Ascending aorta (tissue), 2 donors: ENCODE measurements at regions of chr19 and their contacts with region 1.

Region 1: DNA sequence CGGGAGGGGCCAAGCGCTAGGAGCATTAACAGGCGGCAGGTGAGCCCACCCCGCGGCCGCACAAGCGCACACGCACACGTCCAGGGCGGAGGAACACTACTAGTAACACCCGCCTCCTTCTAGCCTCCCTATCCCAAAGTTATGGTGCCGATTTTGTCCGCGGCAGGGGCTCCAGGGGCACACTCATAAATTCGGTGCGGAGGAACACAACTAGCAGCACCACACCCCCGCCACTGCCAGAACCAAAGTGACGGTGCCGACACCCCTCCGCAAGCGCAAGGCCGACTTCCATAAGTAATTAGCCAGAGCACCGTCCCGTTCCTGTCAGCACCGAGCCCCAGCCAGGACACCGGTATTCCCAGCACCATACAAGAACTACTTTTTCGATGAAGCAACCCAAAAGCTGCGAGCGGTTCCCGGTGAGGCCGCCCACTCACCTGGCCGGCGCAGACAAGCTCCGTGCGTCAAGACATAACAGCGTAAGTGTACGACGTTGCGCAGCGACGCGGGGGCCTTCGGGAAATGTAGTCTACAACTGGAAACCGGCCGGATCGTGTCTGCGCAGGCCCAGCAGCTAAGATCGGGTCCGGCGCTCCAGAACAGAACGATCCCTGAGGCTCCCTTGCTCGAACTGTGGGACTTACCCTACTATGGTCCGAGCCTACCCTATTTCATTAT is at the starts of genes ZNF540 and ZNF571:
- DNase-seq: peak; percentile 81 to 96
- H3K4me3 ChIP-seq: peak within 1 kb of the TSS; percentile 71 to 82
- H3K27ac ChIP-seq: peak within 1 kb of the TSS; percentile 82 to 92
- H3K4me1 ChIP-seq: peaks cover 0 to 3% of the 10 kb centered on the region in 2 donors
- H3K27me3 ChIP-seq: no peaks in the 10 kb centered on the region
- CTCF ChIP-seq: no peak
- total RNA-seq, gene ZNF540: not detected
- total RNA-seq, gene ZNF571: 0.11 TPM

Region 2: DNA sequence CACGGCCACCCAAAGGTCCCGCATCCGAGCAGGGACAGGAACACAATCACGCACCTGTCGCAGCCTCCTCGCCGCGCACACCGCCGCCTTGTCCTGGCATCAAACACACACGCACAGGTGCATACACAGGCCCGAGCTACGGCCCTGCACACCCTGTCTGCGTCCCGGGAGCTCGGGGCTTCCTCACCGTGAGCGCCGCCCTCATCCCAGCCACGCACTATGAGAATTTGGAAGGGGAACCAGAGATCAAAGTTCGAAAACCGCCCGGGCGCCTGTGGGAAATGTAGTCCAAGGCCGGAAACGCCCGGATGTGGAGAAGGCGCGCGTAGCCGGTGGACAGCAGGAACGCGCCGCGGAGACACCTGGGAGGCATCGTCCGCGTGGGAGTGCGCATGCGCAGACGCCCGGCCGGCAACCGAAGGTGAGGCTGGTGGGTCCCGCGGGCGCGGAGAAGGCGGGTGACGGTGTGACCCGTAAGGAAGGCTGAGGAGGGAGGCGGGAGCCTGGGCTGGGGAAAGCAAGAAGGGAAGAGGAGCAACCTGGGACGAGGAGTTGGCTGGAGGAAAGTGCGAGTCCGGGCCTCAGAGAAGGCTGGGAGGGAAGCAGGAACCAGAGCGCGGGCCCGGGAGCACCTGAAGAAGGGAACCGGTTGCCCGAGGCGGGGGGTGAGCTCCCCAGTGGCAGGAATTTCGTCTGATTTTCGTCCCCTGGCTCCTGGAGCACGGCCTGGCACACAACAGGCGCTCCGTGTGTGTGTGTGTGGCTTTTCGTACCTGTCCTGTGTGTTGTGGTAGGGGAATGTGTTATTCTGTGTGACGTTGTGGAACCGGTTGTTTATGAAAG is 907.0 kb before region 1 on chr19 and contains the start of gene ZNF567:
- intact Hi-C with region 1: loop called (anchors 5 kb)
- DNase-seq: peak; percentile 88 to 98
- H3K4me3 ChIP-seq: peak within 1 kb of the TSS; percentile 68 to 75
- H3K27ac ChIP-seq: peak within 1 kb of the TSS; percentile 39 to 66
- H3K4me1 ChIP-seq: peaks cover 0 to 6% of the 10 kb centered on the region in 2 donors
- H3K27me3 ChIP-seq: no peaks in the 10 kb centered on the region
- CTCF ChIP-seq: no peak
- total RNA-seq, gene ZNF567: 3.7 TPM

Region 3: DNA sequence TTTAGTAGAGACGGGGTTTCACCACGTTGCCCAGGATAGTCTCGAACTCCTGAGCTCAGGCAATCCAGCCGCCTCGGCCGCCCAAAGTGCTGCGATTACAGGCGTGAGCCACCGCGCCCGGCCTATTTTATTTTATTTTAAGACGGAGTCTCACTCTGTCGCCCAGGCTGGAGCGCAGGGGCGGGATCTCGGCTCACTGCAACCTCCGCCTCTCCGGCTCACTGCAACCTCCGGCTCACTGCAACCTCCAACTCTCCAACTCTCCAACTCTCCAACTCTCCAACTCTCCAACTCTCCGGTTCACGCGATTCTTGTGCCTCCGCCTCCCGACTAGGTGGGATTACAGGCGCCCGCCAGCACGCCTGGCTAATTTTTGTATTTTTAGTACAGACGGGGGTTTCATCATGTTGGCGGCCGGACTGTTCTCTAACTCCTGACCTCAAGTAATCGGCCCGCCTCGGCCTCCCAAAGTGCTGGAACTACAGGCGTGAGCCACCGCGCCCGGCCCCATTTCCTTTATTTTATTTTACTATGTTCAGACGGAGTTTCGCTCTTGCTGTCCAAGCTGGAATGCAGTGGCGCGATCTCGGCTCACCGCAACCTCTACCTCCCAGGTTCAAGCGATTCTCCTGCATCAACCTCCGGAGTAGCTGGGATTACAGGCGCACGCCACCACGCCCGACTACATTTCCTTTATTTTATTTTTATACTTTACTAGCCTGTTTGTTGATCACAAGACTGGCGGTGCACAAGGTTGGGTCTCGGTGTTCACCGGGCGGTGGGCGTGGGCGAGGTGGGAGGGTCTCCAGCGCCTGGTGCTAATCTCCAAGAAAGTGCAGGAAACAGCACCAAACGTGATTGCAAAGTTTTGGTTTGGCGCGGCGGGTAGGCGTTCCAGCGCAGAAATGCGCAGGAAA is 798.1 kb before region 1 on chr19:
- intact Hi-C with region 1: loop called (anchors 5 kb)
- DNase-seq: no peak
- H3K4me3 ChIP-seq: peak overlapping the region; percentile 87 to 88
- H3K27ac ChIP-seq: peak overlapping the region in 1 of 2 donors; percentile 68
- H3K4me1 ChIP-seq: peaks cover 0 to 3% of the 10 kb centered on the region in 2 donors
- H3K27me3 ChIP-seq: no peaks in the 10 kb centered on the region
- CTCF ChIP-seq: no peak

Region 4: GRCh38 chr19:37506387-37507166 is 87.9 kb before region 1 on chr19 and contains the start of gene ZNF793:
- intact Hi-C with region 1: loop called (anchors 2 kb)
- DNase-seq: peak; percentile 34 to 89
- H3K4me3 ChIP-seq: peak within 1 kb of the TSS; percentile 75 to 88
- H3K27ac ChIP-seq: peak within 1 kb of the TSS; percentile 82 to 98
- H3K4me1 ChIP-seq: peaks cover 0 to 4% of the 10 kb centered on the region in 2 donors
- H3K27me3 ChIP-seq: no peaks in the 10 kb centered on the region
- CTCF ChIP-seq: no peak
- total RNA-seq, gene ZNF793: 3.6 TPM

Region 5: DNA sequence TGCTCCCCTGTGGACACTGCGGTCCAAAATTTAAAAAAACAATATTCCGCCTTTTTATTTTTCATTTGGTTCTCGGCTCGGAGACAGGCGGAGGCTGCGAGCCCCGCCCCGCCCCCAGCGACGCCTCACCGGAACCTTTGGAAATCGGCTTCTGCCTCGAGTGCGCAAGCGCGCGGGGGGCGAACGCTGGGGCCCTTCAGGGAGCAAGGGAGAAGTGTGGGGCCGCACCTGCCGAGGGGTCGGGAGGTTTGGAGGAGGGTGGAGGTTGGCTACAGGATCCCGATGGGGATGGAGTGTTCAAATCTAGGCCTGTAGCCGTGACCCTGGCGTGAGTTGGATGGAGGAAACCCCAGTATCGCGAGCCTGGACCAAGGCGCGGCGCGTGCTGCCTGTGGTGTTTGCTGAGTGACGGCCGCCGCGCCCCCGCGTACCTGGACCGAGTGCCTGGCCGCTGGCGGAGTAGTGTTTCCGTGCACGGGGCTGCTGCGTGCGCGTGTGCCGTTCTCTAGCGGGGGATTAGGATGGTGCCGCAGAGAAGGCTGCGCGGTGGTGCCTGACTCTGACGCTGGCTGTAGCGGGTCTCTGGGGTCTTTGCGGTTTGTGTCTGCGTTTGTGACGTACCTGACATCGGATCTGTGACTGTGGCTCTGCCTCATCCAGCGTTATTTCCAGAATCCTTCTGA is 61.4 kb after region 1 on chr19:
- intact Hi-C with region 1: loop called (anchors 2 kb)
- DNase-seq: peak; percentile 45 to 87
- H3K4me3 ChIP-seq: peak overlapping the region; percentile 72 to 85
- H3K27ac ChIP-seq: peak overlapping the region; percentile 77 to 92
- H3K4me1 ChIP-seq: peaks cover 4 to 14% of the 10 kb centered on the region in 2 donors
- H3K27me3 ChIP-seq: no peaks in the 10 kb centered on the region
- CTCF ChIP-seq: no peak